ENCODE measurements at regions of chr12 and their contacts with region 1.

Region 1: DNA sequence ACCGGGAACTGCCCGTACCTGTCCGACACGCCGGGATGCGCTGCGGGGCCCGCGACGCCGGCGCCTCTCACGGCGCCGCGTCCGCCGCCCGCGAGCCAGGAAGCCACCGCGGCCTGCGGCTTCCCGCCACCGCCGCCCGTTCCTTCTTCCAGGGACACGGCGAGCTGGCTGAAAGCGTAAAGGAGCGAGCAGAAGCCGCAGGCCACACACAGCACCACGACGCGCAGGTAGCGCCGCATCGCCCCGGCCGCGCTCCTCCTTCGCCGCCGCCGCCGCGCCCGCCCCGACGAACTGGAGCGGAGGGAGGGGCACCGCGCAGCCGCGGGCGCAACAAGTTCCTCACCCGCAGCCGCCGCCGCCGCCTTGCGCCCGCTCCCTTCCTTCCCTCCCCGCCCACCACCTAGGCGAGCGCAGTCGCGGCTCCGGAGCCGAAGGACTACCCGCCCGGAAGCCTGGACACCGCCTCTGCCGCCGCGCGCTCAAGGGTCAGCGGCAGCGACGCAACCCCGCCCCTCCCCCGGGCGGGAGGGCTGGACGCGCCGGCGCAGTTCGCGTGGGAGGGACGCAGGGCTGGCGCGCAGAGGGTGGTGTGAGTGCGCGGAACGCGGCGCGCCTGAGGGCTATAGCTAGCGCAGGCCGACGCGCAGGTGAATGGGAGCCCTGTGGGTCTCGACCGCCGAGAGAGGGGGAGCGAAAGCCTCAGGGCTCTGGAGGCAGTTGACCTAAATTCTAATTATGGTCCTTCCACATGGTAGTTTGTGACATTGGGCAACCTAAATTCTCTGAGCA is at the start of gene GXYLT1:
- DNase-seq: peak; percentile 55 to 89 (median 76)
- ATAC-seq: peak; percentile 81
- H3K4me3 ChIP-seq: peak within 1 kb of the TSS; percentile 76
- H3K4me3 Mint-ChIP-seq: peak within 1 kb of the TSS; percentile 95
- H3K27ac ChIP-seq: peak within 1 kb of the TSS; percentile 43 to 59
- H3K27ac Mint-ChIP-seq: peak within 1 kb of the TSS; percentile 79
- H3K4me1 ChIP-seq: peaks cover 17% of the 10 kb centered on the region
- H3K4me1 Mint-ChIP-seq: peaks cover 47% of the 10 kb centered on the region
- H3K27me3 ChIP-seq: no peaks in the 10 kb centered on the region
- H3K27me3 Mint-ChIP-seq: no peaks in the 10 kb centered on the region
- CTCF ChIP-seq: no peak
- total RNA-seq, gene GXYLT1: 8.0 to 8.2 TPM

Region 2: GRCh38 chr12:42084522-42084921 is 60.1 kb before region 1 on chr12:
- CTCF ChIA-PET with region 1: no interaction called
- POLR2A ChIA-PET with region 1: no interaction called
- intact Hi-C with region 1: no loop called
- DNase-seq: no peak
- ATAC-seq: no peak
- H3K4me3 ChIP-seq: no peak overlapping the region
- H3K4me3 Mint-ChIP-seq: no peak overlapping the region
- H3K27ac ChIP-seq: no peak overlapping the region
- H3K27ac Mint-ChIP-seq: no peak overlapping the region
- H3K4me1 ChIP-seq: no peaks in the 10 kb centered on the region
- H3K4me1 Mint-ChIP-seq: no peaks in the 10 kb centered on the region
- H3K27me3 ChIP-seq: no peaks in the 10 kb centered on the region
- H3K27me3 Mint-ChIP-seq: no peaks in the 10 kb centered on the region
- CTCF ChIP-seq: no peak

Region 3: DNA sequence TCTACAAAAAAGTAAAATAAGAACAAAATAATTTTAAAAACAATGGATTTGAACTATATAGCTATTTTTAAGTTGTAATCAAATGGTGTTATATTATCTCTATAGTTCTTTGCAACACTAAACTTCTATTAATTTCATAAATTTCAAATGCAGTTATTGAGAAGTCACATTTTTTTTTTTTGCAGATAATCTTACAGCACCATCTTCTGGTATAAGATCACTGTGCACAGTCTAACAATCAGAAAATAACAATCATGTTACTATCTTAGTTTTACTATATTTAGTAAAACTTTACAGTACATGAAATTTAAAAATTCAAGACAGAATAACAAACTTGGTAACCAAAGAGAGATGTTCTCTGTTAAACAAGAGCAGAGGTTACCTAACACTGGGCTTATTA is 40.5 kb before region 1 on chr12:
- CTCF ChIA-PET with region 1: no interaction called
- POLR2A ChIA-PET with region 1: no interaction called
- intact Hi-C with region 1: loop called in 1 of 2 experiments (anchors 5 kb)
- DNase-seq: no peak
- ATAC-seq: peak; percentile 46
- H3K4me3 ChIP-seq: no peak overlapping the region
- H3K4me3 Mint-ChIP-seq: no peak overlapping the region
- H3K27ac ChIP-seq: no peak overlapping the region
- H3K27ac Mint-ChIP-seq: peak overlapping the region; percentile 66
- H3K4me1 ChIP-seq: no peaks in the 10 kb centered on the region
- H3K4me1 Mint-ChIP-seq: peaks cover 21% of the 10 kb centered on the region
- H3K27me3 ChIP-seq: no peaks in the 10 kb centered on the region
- H3K27me3 Mint-ChIP-seq: no peaks in the 10 kb centered on the region
- CTCF ChIP-seq: peak; percentile 47

Region 4: GRCh38 chr12:42161529-42161928 is 16.9 kb after region 1 on chr12:
- CTCF ChIA-PET with region 1: interaction called, 4 read pairs
- POLR2A ChIA-PET with region 1: interaction called, 11 read pairs
- intact Hi-C with region 1: no loop called
- DNase-seq: no peak
- ATAC-seq: no peak
- H3K4me3 ChIP-seq: no peak overlapping the region
- H3K4me3 Mint-ChIP-seq: no peak overlapping the region
- H3K27ac ChIP-seq: no peak overlapping the region
- H3K27ac Mint-ChIP-seq: no peak overlapping the region
- H3K4me1 ChIP-seq: no peaks in the 10 kb centered on the region
- H3K4me1 Mint-ChIP-seq: peaks cover 12% of the 10 kb centered on the region
- H3K27me3 ChIP-seq: no peaks in the 10 kb centered on the region
- H3K27me3 Mint-ChIP-seq: no peaks in the 10 kb centered on the region
- CTCF ChIP-seq: no peak

Region 5: GRCh38 chr12:42237052-42237852 is 92.7 kb after region 1 on chr12:
- CTCF ChIA-PET with region 1: no interaction called
- POLR2A ChIA-PET with region 1: interaction called, 6 read pairs
- intact Hi-C with region 1: loop called (anchors 2 to 5 kb)
- DNase-seq: peak; percentile 42 to 90 (median 62)
- ATAC-seq: peak; percentile 72
- H3K4me3 ChIP-seq: peak overlapping the region; percentile 64
- H3K4me3 Mint-ChIP-seq: peak overlapping the region; percentile 91
- H3K27ac ChIP-seq: peak overlapping the region; percentile 35 to 56
- H3K27ac Mint-ChIP-seq: peak overlapping the region; percentile 93
- H3K4me1 ChIP-seq: peaks cover 17% of the 10 kb centered on the region
- H3K4me1 Mint-ChIP-seq: peaks cover 55% of the 10 kb centered on the region
- H3K27me3 ChIP-seq: no peaks in the 10 kb centered on the region
- H3K27me3 Mint-ChIP-seq: no peaks in the 10 kb centered on the region
- CTCF ChIP-seq: peak; percentile 56

Region 6: DNA sequence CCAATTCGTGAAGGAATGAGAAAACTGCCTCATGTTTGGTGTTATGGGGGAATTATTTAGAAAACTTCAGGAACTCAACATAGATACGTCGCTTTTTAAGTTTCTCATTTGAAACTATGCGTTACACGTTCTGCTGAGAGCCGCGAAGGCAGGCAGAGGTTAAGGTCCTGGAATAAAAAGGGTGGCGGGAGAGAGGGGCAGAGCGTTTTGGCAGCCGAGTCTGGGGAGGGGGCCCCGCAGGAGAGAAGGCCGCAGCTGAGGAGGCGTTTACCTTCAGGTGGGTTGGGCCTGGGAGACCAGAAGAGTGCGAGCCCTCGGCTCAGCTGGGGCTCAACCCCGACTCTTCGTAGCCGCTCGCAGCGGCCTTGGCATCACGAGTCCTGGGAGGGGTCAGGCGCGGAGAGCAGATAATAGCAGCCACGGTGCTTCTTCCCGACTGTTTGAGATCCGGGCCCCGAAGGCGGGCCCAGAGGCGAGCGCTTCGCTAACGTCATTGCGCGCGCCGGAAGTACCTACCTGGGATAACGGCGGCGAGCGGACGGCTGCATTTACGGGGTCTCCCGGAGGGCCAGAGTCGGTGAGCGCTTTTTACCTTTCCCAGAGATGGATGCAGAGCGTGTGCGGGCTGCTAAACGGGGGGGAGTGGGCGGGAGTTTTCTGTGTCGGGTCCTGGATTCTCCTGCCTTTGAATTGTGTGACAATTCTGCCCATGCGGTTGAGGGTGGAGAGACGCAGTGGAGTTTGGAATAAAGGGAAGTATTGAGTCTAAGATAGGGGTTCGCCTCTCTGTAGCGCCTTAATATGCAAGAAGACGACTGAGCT is 181.3 kb after region 1 on chr12 and contains the starts of genes PPHLN1 and ZCRB1:
- CTCF ChIA-PET with region 1: no interaction called
- POLR2A ChIA-PET with region 1: interaction called, 11 read pairs
- intact Hi-C with region 1: loop called (anchors 2 kb)
- DNase-seq: peak; percentile 56 to 88 (median 70)
- ATAC-seq: peak; percentile 87
- H3K4me3 ChIP-seq: peak within 1 kb of the TSS; percentile 85
- H3K4me3 Mint-ChIP-seq: peak within 1 kb of the TSS; percentile 99
- H3K27ac ChIP-seq: peak within 1 kb of the TSS; percentile 79 to 80
- H3K27ac Mint-ChIP-seq: peak within 1 kb of the TSS; percentile 97
- H3K4me1 ChIP-seq: peaks cover 27% of the 10 kb centered on the region
- H3K4me1 Mint-ChIP-seq: peaks cover 61% of the 10 kb centered on the region
- H3K27me3 ChIP-seq: no peaks in the 10 kb centered on the region
- H3K27me3 Mint-ChIP-seq: no peaks in the 10 kb centered on the region
- CTCF ChIP-seq: no peak
- total RNA-seq, gene PPHLN1: 100 to 105 TPM
- total RNA-seq, gene ZCRB1: 30.3 to 31.4 TPM

Measured in CD4-positive, alpha-beta T cell (primary cell).